K562 (cell line): ENCODE measurements at regions of chr3 and their contacts with region 1.

Region 1: DNA sequence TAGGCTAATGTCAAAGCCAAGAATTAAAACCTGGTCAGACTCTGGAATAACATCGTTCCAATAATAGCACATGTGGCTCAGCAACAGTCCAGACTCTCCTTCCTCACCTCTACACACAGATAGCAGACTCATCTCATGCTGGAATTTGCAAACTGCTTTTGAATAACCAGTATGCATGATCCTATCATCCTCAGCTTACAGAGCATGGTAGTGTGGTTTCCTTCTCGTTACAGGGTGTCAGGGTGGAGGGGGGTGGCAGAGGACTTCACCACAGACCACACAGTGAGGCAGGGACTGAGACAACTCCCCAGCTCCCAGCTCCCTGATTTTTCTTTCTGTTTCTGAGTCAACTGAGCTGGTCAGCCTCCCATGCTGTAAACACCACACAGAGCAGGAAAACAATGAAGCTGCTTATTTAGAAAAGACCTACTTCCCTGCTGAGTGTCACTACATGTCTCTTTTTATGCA is 101.6 kb downstream of the RPL22L1 start:
- DNase-seq: no peak
- ATAC-seq: peak; percentile 44
- H3K4me3 ChIP-seq: no peak overlapping the region
- H3K27ac ChIP-seq: peak overlapping the region; percentile 43; the same call in 2 of the 3 replicates
- H3K4me1 ChIP-seq: peaks cover 24 to 42% of the 10 kb centered on the region in 2 experiments
- H3K27me3 ChIP-seq: no peaks in the 10 kb centered on the region
- CTCF ChIP-seq: no peak
- EP300 ChIP-seq: no peak
- POLR2A ChIP-seq: no peak
- RAD21 ChIP-seq: peak in 1 of 2 experiments; percentile 29; a peak in 1 of 4 replicates

Region 2: GRCh38 chr3:170330366-170330765 is 438.0 kb before region 1 on chr3:
- CTCF ChIA-PET with region 1: no interaction called
- POLR2A ChIA-PET with region 1: no interaction called
- in situ Hi-C with region 1: no loop called
- intact Hi-C with region 1: no loop called
- DNase-seq: peak; percentile 28 to 67 (median 41)
- ATAC-seq: peak; percentile 81
- H3K4me3 ChIP-seq: no peak overlapping the region
- H3K27ac ChIP-seq: peak overlapping the region; percentile 36; the same call in 1 of the 3 replicates
- H3K4me1 ChIP-seq: peaks cover 10% of the 10 kb centered on the region in 2 experiments; a peak in 3 of 5 replicates
- H3K27me3 ChIP-seq: no peaks in the 10 kb centered on the region
- CTCF ChIP-seq: no peak
- EP300 ChIP-seq: no peak
- POLR2A ChIP-seq: no peak
- RAD21 ChIP-seq: no peak

Region 3: GRCh38 chr3:170778240-170779217 is 10.2 kb after region 1 on chr3:
- CTCF ChIA-PET with region 1: no interaction called
- POLR2A ChIA-PET with region 1: interaction called, 14 read pairs
- in situ Hi-C with region 1: no loop called
- intact Hi-C with region 1: no loop called
- DNase-seq: peak; percentile 30 to 93 (median 58)
- ATAC-seq: peak; percentile 86
- H3K4me3 ChIP-seq: no peak overlapping the region
- H3K27ac ChIP-seq: peak overlapping the region; percentile 70
- H3K4me1 ChIP-seq: peaks cover 12 to 61% of the 10 kb centered on the region in 2 experiments
- H3K27me3 ChIP-seq: no peaks in the 10 kb centered on the region
- CTCF ChIP-seq: no peak
- EP300 ChIP-seq: peak; percentile 99
- POLR2A ChIP-seq: no peak
- RAD21 ChIP-seq: peak in 1 of 2 experiments; percentile 40; a peak in 3 of 4 replicates